ENCODE measurements at regions of chr10 and their contacts with region 1.

Region 1: DNA sequence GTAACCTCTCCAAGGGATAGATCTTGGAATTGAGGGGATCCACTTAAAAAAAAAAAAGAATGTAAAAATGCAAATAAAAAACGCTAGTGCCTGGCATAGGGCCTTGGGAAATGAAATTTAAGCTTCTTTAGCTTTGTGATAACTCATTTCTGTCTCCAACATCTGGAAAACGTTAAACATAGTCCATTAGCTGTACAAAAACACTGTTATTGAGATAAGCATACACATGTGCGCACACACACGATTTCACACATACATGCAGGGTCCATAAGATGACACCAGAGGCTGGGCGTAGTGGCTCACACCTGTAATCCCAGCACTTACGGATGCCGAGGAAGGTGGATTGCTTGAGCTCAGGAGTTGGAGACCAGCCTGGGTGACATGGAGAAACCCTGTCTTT is 13.7 kb upstream of the CUL2 start:
- DNase-seq: no peak
- H3K4me3 ChIP-seq: no peak overlapping the region
- H3K27ac ChIP-seq: no peak overlapping the region
- H3K4me1 ChIP-seq: no peaks in the 10 kb centered on the region
- H3K27me3 ChIP-seq: peaks cover 0 to 2% of the 10 kb centered on the region in 2 experiments
- CTCF ChIP-seq: no peak
- POLR2A ChIP-seq: no peak

Region 2: DNA sequence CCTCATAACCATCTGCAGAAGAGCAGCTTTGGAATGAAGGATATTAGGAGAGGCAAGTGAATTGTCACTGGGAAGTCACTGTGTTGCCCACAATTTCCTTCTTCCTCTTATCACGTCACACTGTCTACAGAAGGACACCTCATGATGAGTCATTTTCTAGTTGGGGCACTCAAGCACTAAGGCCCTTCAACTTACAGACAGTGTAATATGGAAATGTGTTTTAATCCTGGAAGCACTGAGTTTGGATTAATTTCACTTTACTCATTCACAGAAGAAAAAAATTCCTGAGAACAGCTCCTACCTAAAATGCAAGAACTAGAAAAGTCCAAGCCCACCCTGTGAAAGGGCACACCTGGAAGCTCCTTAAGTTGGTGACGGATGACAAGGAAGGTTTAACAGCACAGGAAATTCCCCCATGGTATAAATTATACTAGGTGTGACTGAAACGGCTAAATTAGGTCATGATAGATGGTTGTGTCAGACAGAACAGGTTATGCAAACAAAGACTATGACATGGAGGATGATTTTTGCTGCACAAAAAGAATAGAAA is 345.4 kb before region 1 on chr10:
- CTCF ChIA-PET with region 1: no interaction called
- POLR2A ChIA-PET with region 1: no interaction called
- dilution Hi-C with region 1: no loop called
- intact Hi-C with region 1: no loop called
- DNase-seq: peak; percentile 71
- H3K4me3 ChIP-seq: peak overlapping the region in 1 of 3 experiments; percentile 30
- H3K27ac ChIP-seq: peak overlapping the region; percentile 71
- H3K4me1 ChIP-seq: peaks cover 23% of the 10 kb centered on the region
- H3K27me3 ChIP-seq: no peaks in the 10 kb centered on the region
- CTCF ChIP-seq: no peak
- POLR2A ChIP-seq: no peak

Region 3: DNA sequence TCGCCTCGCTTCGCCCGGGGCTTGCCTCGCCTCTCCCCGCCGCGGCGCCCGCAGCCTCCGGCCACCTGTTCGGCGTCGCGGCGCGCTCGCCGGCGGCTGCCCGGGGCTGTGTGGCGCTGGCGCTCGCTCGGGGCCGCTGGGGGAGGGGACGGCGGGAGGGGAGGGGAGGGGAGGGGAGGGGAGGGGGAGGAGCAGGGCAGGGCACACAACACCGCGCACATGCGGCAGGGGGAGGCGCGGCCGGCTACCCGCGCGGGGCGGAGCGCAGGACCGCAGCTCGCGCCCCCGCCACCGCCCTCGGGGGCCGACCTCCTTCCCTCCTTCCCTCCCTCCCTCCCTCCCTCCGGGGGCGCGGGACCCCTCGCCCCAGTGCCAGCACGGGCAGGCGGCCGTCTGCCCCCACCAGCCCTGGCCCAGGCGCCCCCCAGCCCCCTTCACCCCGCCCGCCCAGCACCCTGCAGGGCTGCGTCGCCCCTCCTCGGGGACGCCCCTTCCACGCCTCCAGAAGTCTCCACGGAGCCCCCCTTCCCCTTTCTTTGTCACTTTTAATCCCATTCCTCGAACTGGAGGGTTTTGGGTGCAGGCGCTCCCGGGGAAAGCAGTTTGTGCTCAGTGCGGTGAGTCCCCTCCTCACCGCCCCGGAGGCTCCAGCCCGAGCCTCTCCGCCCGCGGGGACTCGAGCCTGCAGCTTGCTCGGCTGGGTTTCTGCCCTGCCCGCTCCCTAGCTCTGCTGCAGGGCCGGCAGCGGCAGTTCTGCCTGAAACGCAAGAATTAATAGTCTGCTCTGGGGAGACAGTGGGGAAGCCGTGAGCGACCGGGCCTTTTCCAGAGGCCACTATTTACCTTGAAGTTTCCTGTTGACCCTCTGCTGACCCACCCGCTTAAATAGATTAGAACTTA is 288.4 kb before region 1 on chr10 and contains the start of gene PARD3:
- CTCF ChIA-PET with region 1: no interaction called
- POLR2A ChIA-PET with region 1: no interaction called
- dilution Hi-C with region 1: no loop called
- intact Hi-C with region 1: no loop called
- DNase-seq: peak; percentile 54
- H3K4me3 ChIP-seq: peak within 1 kb of the TSS; percentile 53 to 92 (median 65)
- H3K27ac ChIP-seq: peak within 1 kb of the TSS; percentile 50
- H3K4me1 ChIP-seq: peaks cover 14% of the 10 kb centered on the region
- H3K27me3 ChIP-seq: peaks cover 3 to 6% of the 10 kb centered on the region in 2 experiments
- CTCF ChIP-seq: no peak
- POLR2A ChIP-seq: no peak
- total RNA-seq, gene PARD3: 20.2 and 24.1 TPM in 2 replicates

Region 4: DNA sequence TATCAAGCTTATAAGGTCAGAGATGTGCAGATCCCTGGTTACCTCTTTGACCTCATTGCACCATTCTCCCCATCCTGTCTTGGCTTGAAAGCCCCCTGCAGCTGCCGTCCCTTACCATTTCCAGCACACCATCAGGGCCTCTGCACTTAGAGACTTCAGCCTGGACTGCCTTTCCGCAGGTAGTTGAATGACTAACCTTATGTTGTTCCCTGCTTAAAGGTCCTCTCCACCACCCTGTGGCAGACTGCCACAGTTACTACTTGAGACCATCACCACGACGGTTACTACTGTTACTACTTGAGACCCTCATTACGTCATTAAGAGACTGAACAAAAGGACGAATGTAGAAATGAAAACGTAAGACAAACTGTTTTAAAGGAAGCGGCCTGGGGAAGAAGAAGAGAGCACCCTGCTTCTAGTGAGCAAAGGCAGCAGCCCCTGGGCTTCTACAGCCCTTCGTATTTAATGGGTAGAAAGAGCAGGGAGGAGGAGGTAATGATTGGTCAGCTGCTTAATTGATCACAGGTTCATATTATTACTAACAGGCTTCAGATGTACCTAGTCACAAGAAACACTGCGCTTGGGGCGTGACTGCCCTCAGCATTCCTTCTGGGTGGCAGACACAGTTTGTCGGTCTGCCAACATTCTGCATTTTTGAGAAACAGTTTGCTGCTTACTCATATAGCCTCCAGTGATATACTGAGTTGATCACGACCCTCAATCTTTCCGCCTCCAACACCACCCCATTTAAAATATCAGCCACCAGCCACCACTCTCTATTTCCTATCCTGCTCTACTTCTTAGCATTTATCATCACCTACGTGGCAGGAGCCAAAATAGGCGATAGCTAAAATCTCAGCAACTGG is 214.6 kb before region 1 on chr10:
- CTCF ChIA-PET with region 1: no interaction called
- POLR2A ChIA-PET with region 1: no interaction called
- dilution Hi-C with region 1: no loop called
- intact Hi-C with region 1: no loop called
- DNase-seq: no peak
- H3K4me3 ChIP-seq: no peak overlapping the region
- H3K27ac ChIP-seq: no peak overlapping the region
- H3K4me1 ChIP-seq: no peaks in the 10 kb centered on the region
- H3K27me3 ChIP-seq: peaks cover 0 to 1% of the 10 kb centered on the region in 2 experiments
- CTCF ChIP-seq: no peak
- POLR2A ChIP-seq: no peak

Region 5: GRCh38 chr10:35218339-35218955 is 114.6 kb after region 1 on chr10:
- CTCF ChIA-PET with region 1: no interaction called
- POLR2A ChIA-PET with region 1: no interaction called
- dilution Hi-C with region 1: loop called (anchors 25 kb)
- intact Hi-C with region 1: no loop called
- DNase-seq: peak; percentile 86
- H3K4me3 ChIP-seq: no peak overlapping the region
- H3K27ac ChIP-seq: no peak overlapping the region
- H3K4me1 ChIP-seq: peaks cover 3% of the 10 kb centered on the region
- H3K27me3 ChIP-seq: no peaks in the 10 kb centered on the region
- CTCF ChIP-seq: peak; percentile 62 to 80
- POLR2A ChIP-seq: no peak

Region 6: DNA sequence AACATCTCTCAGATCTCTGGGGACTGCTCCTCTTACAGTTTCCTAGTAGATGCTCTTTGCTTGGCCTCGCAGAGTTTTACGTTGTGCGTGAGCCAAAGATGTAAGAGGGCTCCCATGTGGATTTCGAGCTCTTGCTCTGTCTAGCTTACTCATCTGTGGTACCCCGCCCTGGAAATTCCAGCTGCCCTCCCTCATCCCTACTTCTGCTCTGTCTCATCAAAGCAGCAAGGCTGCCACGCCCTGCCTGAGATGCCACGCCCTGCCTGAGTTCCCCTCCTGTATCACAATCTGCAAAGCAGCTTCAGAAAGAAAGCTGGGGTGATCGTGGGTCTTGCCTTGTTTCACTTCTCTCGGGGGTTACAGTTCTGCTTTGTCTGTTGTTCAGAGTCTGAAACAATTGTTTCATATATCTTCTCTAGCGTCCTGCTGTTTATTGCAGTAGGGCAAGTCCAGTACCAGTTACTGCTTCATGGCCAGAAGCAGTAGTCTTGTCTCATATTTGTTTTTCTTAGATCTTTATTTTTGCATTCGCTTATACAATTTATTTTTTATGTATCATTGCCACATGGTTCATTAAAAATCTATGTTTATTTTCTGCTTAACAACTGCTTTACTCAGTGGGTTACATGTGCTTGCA is 196.3 kb after region 1 on chr10:
- CTCF ChIA-PET with region 1: no interaction called
- POLR2A ChIA-PET with region 1: no interaction called
- dilution Hi-C with region 1: no loop called
- intact Hi-C with region 1: no loop called
- DNase-seq: no peak
- H3K4me3 ChIP-seq: no peak overlapping the region
- H3K27ac ChIP-seq: no peak overlapping the region
- H3K4me1 ChIP-seq: no peaks in the 10 kb centered on the region
- H3K27me3 ChIP-seq: peaks cover 2% of the 10 kb centered on the region in 2 experiments
- CTCF ChIP-seq: no peak
- POLR2A ChIP-seq: no peak